ENCODE measurements at regions of chrX and their contacts with region 1.

Region 1: DNA sequence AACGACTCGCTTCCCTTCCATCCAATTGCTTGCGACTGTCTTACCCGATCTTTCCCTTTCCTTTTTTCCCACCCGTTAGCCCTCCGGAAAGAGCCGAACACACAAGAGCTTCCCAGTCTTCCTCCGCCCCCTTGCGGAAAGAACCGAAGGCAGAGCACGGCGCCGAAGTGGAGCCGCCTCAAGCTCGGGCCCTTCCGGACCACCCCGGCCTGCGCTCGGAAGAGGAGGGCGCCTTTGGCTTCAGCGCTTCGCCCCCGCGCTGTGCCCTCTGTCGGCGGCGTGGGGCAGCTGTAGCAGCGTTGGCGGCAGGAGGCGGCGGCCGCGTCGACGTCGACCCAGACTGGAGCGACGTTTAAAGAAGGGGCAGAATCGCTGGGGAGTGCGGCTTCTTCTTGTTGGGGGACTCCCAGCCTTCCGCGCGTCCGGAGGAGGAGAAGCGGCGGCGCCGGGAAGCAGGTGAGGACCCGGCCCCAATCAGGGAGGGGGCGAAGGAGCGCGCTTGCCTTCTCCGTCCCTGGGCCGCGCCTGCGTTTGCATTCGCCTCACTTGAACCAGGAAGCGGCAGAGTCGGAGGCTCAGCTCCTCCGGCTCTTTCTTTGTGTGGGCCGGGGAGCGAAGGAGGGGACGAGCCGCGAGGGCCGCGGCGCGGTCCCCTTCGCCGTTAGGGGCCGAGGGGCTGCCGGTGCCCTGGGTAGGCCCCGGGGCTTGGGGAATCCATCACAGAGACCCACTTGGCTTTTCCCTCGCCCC is at the start of gene ZBTB33:
- DNase-seq: peak; percentile 72 to 97 (median 80)

Region 2: GRCh38 chrX:120310861-120311726 is 60.4 kb after region 1 on chrX and contains the start of gene TMEM255A:
- intact Hi-C with region 1: loop called (anchors 2 kb)
- DNase-seq: peak in 7 of 10 donors; percentile 8 to 91 (median 28)

Region 3: GRCh38 chrX:120485638-120486520 is 235.2 kb after region 1 on chrX:
- intact Hi-C with region 1: no loop called
- DNase-seq: peak; percentile 67 to 98 (median 82)

Region 4: DNA sequence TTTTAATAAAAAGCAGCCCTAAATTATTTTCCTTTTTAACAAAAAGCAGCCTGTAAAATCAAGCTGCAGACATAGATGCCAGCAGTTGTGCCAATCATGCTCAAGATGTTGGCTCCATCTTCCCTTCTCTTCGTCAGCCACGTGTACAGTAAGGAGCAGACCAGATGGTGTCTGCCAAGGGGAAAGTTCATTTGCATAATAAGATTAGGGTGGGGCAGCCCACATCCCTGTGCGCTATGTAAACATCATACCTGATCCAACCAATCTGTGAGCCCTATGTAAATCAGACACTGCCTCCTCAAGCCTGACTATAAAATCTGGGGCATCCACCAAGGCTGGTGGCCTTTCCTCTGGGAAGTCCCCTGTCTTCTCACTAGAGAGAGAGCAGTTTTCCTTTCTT is 402.3 kb after region 1 on chrX:
- intact Hi-C with region 1: no loop called
- DNase-seq: no peak